PC-9 (cell line): ENCODE measurements at regions of chr7 and their contacts with region 1.

Region 1: DNA sequence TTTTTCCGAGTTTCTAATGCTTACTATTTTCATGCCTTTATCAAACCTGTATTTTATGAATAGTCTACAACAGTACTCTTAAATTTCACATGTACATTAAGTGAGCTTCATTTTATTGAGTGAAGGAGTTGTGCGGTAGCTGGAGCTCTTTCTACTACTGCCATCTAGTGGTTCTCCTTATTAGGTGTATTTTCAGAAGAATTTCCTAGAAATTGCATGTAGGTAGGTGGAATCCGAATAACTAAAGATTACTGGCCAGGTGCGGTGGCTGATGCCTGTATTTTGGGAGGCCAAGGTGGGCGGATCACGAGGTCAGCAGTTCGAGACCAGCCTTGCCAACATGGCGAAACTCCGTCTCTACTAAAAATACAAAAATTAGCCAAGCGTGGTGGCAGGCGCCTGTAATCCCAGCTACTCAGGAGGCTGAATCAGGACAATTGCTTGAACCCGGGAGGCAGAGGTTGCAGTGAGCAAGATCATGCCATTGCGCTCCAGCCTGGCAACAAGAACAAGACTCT is 38.3 kb downstream of the LRRC72 start:
- DNase-seq: peak; percentile 30 to 70
- H3K4me3 ChIP-seq: no peak overlapping the region
- H3K27ac ChIP-seq: no peak overlapping the region
- H3K4me1 ChIP-seq: no peaks in the 10 kb centered on the region
- H3K27me3 ChIP-seq: no peaks in the 10 kb centered on the region
- CTCF ChIP-seq: peak; percentile 96

Region 2: GRCh38 chr7:14717816-14718215 is 1847.2 kb before region 1 on chr7:
- CTCF ChIA-PET with region 1: interaction called, 3 read pairs
- POLR2A ChIA-PET with region 1: no interaction called
- intact Hi-C with region 1: loop called (anchors 10 kb)
- DNase-seq: no peak
- H3K4me3 ChIP-seq: no peak overlapping the region
- H3K27ac ChIP-seq: no peak overlapping the region
- H3K4me1 ChIP-seq: no peaks in the 10 kb centered on the region
- H3K27me3 ChIP-seq: no peaks in the 10 kb centered on the region
- CTCF ChIP-seq: peak; percentile 77

Region 3: GRCh38 chr7:16114633-16115032 is 450.3 kb before region 1 on chr7:
- CTCF ChIA-PET with region 1: interaction called, 5 read pairs
- POLR2A ChIA-PET with region 1: no interaction called
- intact Hi-C with region 1: loop called (anchors 1 kb)
- DNase-seq: no peak
- H3K4me3 ChIP-seq: no peak overlapping the region
- H3K27ac ChIP-seq: no peak overlapping the region
- H3K4me1 ChIP-seq: no peaks in the 10 kb centered on the region
- H3K27me3 ChIP-seq: no peaks in the 10 kb centered on the region
- CTCF ChIP-seq: peak; percentile 82

Region 4: DNA sequence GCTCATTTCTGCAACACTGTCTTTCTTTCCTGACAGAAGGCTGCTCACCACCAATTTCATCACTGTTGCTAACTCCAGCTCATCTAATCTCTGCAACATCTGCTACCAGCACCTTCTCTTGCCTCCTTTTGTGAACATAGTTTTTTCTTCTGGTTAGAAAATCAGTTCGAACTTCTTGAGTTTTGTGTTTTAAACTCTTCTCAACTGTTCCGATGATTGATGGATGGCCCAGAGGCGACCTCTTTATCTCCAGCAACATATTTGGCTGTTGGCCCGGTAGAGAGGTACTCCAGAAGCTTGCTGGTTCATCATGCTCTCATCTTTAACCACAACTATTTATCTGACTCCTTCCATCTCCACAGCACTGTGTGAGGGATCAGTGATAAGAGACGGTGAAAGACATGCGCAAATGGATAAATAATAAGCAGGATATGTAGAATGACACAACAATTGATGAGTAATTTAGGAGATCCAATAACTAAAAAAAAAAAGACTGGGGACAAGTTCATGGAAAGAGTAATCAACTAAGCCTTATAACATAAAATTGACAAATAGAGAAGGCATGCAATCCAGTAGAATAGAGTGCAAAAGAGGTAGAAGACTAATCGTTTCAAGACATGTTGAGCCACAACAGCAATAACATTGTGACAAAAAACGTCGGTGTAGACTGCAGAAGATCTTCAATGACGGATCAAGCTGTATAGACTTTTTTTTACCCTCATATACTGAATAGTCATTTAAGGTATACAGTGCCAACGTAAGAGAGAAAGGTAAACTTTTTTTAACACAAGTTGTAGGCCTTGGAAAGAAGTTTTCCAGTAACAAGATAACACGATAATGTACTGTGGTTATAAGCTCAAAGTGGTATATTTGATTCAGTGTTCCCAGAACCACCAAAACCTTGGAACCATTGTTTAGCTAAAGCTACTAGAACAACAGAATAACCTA is 295.9 kb before region 1 on chr7:
- CTCF ChIA-PET with region 1: no interaction called
- POLR2A ChIA-PET with region 1: interaction called, 3 read pairs
- intact Hi-C with region 1: loop called (anchors 2 kb)
- DNase-seq: peak; percentile 76 to 91
- H3K4me3 ChIP-seq: 0 out of 2 replicates have a peak overlapping the region, but pooled peaks have one; percentile 12
- H3K27ac ChIP-seq: 0 out of 2 replicates have a peak overlapping the region, but pooled peaks have one; percentile 10
- H3K4me1 ChIP-seq: peaks cover 35% of the 10 kb centered on the region
- H3K27me3 ChIP-seq: no peaks in the 10 kb centered on the region
- CTCF ChIP-seq: no peak

Region 5: GRCh38 chr7:16420649-16421332 is 144.2 kb before region 1 on chr7:
- CTCF ChIA-PET with region 1: interaction called, 6 read pairs
- POLR2A ChIA-PET with region 1: interaction called, 11 read pairs
- intact Hi-C with region 1: loop called (anchors 2 kb)
- DNase-seq: peak; percentile 90 to 92
- H3K4me3 ChIP-seq: peak overlapping the region; percentile 68
- H3K27ac ChIP-seq: peak overlapping the region; percentile 89
- H3K4me1 ChIP-seq: peaks cover 56% of the 10 kb centered on the region
- H3K27me3 ChIP-seq: no peaks in the 10 kb centered on the region
- CTCF ChIP-seq: peak; percentile 53; the same call in 1 of the 2 replicates

Region 6: DNA sequence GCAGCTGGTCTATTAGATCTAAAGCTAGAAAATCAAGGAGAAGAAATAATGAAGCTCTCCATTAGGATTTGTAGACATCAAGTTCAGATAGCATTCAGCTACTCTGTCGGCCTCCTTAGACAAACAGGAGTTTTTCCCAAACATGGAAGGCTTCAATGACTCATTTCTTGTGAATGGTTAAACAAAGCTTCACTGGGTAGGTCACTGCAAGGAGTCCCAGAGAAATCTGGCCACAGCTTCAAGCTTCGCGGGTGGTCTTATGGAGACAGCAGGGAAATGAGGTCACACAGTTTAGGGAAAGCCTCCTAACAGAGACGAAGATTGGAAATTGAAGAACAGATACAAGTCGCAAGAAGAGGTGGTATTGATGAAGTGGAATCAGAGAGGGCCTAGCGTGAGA is 61.0 kb before region 1 on chr7:
- CTCF ChIA-PET with region 1: no interaction called
- POLR2A ChIA-PET with region 1: no interaction called
- intact Hi-C with region 1: no loop called
- DNase-seq: no peak
- H3K4me3 ChIP-seq: no peak overlapping the region
- H3K27ac ChIP-seq: no peak overlapping the region
- H3K4me1 ChIP-seq: no peaks in the 10 kb centered on the region
- H3K27me3 ChIP-seq: no peaks in the 10 kb centered on the region
- CTCF ChIP-seq: no peak

Region 7: GRCh38 chr7:17021180-17021579 is 456.2 kb after region 1 on chr7:
- CTCF ChIA-PET with region 1: no interaction called
- POLR2A ChIA-PET with region 1: interaction called, 15 read pairs
- intact Hi-C with region 1: no loop called
- DNase-seq: no peak
- H3K4me3 ChIP-seq: no peak overlapping the region
- H3K27ac ChIP-seq: no peak overlapping the region
- H3K4me1 ChIP-seq: no peaks in the 10 kb centered on the region
- H3K27me3 ChIP-seq: no peaks in the 10 kb centered on the region
- CTCF ChIP-seq: no peak